ENCODE measurements at regions of chr7 and their contacts with region 1.

Region 1: DNA sequence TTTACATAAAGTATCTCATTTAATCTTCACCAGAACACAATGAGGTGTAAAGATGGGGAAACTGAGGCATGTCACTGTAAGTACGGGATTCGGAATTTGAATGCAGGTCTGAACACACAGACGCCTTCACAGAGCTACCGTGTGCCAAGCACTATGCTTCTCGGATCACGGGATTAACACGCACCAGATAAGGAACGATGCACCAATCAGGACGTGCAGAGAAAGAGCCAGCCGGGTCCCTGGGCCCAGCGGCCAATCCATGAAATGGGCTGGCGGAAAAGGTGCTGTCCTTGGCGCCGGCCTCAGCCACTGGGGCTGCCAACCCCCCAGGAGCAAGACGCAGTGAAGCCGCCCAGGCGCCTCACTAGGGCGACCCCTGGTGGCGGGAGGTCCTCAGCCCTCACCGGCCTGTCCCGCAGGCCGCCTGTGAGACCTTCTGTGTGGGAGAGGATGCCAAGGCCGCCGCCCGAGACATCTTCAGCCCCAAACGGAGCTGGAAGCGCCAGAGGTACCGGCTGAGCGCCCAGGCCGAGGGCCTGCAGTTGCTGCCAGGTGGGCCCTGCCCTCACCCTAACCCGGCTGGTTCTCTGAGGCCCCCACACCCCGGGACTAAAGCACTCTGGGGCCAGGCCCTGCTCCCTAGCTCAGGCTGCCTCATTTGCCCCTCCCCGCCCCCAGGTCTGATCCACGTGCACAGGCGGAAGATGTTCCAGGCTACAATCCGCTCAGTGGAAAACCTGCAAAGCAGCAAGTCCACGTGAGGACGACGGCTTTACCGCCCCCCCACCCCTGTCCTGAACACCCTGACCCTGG is 15.6 kb downstream of the ATG9B start:
- DNase-seq: peak; percentile 95
- ATAC-seq: peak; percentile 68
- H3K4me3 Mint-ChIP-seq: peak overlapping the region; percentile 40
- H3K27ac Mint-ChIP-seq: no peak overlapping the region; the same call in 1 of the 2 replicates
- H3K4me1 Mint-ChIP-seq: peaks cover 32% of the 10 kb centered on the region
- H3K27me3 Mint-ChIP-seq: peaks cover 13% of the 10 kb centered on the region
- CTCF ChIP-seq: peak; percentile 86

Region 2: GRCh38 chr7:150898475-150899011 is 110.2 kb before region 1 on chr7:
- CTCF ChIA-PET with region 1: interaction called, 10 read pairs
- POLR2A ChIA-PET with region 1: no interaction called
- DNase-seq: peak; percentile 86
- ATAC-seq: peak; percentile 75
- H3K4me3 Mint-ChIP-seq: no peak overlapping the region
- H3K27ac Mint-ChIP-seq: no peak overlapping the region
- H3K4me1 Mint-ChIP-seq: peaks cover 37% of the 10 kb centered on the region
- H3K27me3 Mint-ChIP-seq: peaks cover 59% of the 10 kb centered on the region
- CTCF ChIP-seq: peak; percentile 90

Region 3: DNA sequence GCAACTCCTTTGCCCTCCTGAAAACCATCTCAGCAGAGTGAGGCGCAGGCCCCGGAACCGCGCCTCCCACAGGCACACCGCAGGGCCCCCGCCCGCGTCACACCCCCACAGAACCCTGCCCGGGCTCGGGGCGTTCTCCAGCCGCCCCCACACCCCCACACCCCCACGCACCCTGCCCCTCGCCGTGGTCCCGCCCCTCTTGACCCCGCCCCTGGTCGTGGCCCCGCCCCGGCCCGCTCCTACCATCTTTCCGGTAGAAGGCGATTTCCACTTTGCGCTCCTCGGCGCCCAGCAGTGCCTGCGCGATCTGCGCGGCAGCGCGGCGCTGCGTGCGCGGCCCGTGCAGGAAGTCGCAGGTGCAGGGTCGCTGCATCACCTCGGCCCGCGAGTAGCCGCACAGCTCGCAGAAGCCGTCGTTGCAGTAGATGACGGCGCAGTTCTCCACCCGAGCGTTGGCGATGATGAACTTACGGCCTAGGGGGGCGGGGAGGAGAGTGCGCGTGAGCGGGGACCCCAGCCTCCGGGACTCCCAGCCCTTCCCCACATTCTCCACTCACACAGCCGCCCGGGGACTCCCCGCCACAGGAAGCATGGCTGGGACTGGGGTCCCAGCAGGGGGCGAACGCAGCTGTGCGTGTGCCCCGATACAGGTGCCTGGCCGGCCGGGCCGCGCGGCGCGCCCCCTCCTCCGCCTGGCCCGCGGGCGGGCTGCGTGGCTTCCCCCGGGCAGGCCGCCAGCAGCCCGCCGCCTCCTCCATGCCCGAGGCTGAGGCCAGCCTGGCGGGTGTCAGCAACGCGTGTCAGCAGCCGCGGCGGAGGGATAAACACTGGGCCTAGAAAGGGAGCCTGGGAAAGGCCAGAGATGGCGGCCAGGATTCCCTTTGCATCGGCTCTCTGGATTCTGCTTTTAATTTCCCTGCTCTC is 34.0 kb before region 1 on chr7:
- CTCF ChIA-PET with region 1: interaction called, 39 read pairs
- POLR2A ChIA-PET with region 1: no interaction called
- DNase-seq: peak; percentile 62
- ATAC-seq: peak; percentile 2; the same call in 1 of the 2 replicates
- H3K4me3 Mint-ChIP-seq: peak overlapping the region; percentile 82
- H3K27ac Mint-ChIP-seq: no peak overlapping the region
- H3K4me1 Mint-ChIP-seq: peaks cover 52% of the 10 kb centered on the region
- H3K27me3 Mint-ChIP-seq: peaks cover 30% of the 10 kb centered on the region
- CTCF ChIP-seq: no peak

Region 4: GRCh38 chr7:150994141-150994964 is 14.4 kb before region 1 on chr7:
- CTCF ChIA-PET with region 1: interaction called, 61 read pairs
- POLR2A ChIA-PET with region 1: no interaction called
- DNase-seq: no peak
- ATAC-seq: no peak
- H3K4me3 Mint-ChIP-seq: no peak overlapping the region
- H3K27ac Mint-ChIP-seq: no peak overlapping the region
- H3K4me1 Mint-ChIP-seq: peaks cover 25% of the 10 kb centered on the region
- H3K27me3 Mint-ChIP-seq: peaks cover 16% of the 10 kb centered on the region
- CTCF ChIP-seq: no peak

Region 5: GRCh38 chr7:151038951-151039849 is 30.5 kb after region 1 on chr7:
- CTCF ChIA-PET with region 1: no interaction called
- POLR2A ChIA-PET with region 1: no interaction called
- DNase-seq: no peak
- ATAC-seq: peak; percentile 18
- H3K4me3 Mint-ChIP-seq: no peak overlapping the region
- H3K27ac Mint-ChIP-seq: no peak overlapping the region
- H3K4me1 Mint-ChIP-seq: no peaks in the 10 kb centered on the region
- H3K27me3 Mint-ChIP-seq: no peaks in the 10 kb centered on the region
- CTCF ChIP-seq: no peak

Region 6: DNA sequence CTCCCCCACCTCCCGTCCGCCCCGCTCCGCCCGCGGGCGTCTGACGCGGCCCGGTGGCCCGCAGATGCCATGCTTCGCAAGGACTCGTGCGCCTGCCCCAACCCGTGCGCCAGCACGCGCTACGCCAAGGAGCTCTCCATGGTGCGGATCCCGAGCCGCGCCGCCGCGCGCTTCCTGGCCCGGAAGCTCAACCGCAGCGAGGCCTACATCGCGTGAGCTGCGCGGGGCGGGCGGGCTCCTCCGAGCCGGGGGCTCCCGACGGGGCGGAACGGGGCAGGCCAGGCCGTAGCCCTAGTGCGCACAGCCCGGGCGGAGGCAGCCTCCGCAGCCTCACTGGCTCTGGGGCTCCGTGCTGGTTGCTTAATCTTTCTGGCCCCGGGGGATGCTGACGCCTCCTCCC is 42.4 kb after region 1 on chr7:
- CTCF ChIA-PET with region 1: interaction called, 15 read pairs
- POLR2A ChIA-PET with region 1: no interaction called
- DNase-seq: peak; percentile 90
- ATAC-seq: peak; percentile 85
- H3K4me3 Mint-ChIP-seq: no peak overlapping the region
- H3K27ac Mint-ChIP-seq: no peak overlapping the region
- H3K4me1 Mint-ChIP-seq: peaks cover 3% of the 10 kb centered on the region; the same call in 1 of the 2 replicates
- H3K27me3 Mint-ChIP-seq: peaks cover 34% of the 10 kb centered on the region
- CTCF ChIP-seq: no peak

Region 7: DNA sequence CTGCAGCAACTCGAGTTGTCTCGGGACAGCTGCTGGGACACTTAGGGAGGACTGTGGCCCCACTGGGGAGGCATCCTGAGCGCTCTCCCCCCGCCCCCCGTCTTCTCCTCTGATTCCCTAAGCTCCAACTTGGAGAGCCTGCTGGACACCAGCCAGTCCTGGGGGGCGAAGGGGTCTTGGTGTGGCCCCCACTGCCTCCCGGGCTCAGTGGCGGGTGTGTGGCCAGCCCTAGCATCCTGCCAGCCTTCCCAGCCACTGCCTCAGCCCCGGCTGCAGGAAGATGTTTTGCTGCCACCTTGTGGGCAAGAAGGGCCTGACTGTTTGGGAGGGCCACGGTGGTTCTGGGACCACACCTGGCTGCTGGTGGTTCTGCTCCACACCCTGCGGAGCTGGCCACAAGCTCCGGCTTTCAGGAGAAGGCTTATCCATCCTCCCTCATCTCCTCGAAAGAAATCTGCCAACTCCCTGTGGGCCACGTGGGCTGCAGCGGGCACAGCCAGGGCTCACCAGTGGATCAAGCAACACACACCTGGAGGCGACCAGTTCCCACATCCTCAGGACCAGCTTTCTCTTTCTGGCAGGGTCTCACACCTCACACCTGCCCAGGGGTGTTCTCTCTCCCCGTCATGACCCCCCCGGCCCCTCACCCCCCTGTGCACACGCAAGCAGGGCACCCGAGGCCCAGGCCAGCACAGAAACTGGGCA is 102.4 kb after region 1 on chr7:
- CTCF ChIA-PET with region 1: interaction called, 56 read pairs
- POLR2A ChIA-PET with region 1: no interaction called
- DNase-seq: peak; percentile 89
- ATAC-seq: peak; percentile 56
- H3K4me3 Mint-ChIP-seq: no peak overlapping the region
- H3K27ac Mint-ChIP-seq: no peak overlapping the region
- H3K4me1 Mint-ChIP-seq: peaks cover 34% of the 10 kb centered on the region
- H3K27me3 Mint-ChIP-seq: peaks cover 9% of the 10 kb centered on the region
- CTCF ChIP-seq: peak; percentile 90

Measured in WTC11 (cell line).